ENCODE measurements at regions of chr6 and their contacts with region 1.

Region 1: DNA sequence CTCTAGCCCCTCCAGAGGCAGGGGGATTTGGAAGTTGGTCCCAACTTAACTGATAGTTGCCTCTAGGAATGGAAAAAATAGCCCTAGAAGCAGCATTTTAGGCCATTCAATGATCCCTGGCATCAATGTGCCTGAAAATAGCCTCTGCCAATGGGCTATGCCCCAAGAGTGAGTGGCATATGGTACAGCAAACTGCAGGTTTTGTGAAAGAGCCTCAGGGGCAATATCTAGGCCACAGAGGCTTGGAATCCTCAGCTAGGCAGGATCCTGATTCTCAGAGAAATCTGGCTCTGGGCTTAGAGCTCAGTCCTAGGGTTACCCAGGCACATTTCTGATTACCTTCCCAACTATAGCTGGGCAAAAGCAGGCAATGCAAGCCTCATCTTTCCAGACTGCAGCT is 104.4 kb upstream of the MOCS1 start:
- DNase-seq: no peak
- H3K4me3 ChIP-seq: no peak overlapping the region
- H3K27ac ChIP-seq: no peak overlapping the region
- H3K4me1 ChIP-seq: peaks cover 0 to 7% (median 3%) of the 10 kb centered on the region in 4 experiments; a peak in 3 of 7 replicates
- H3K27me3 ChIP-seq: no peaks in the 10 kb centered on the region
- CTCF ChIP-seq: no peak
- EP300 ChIP-seq: no peak
- POLR2A ChIP-seq: no peak
- RAD21 ChIP-seq: peak in 1 of 2 experiments; percentile 34; a peak in 1 of 4 replicates

Region 2: DNA sequence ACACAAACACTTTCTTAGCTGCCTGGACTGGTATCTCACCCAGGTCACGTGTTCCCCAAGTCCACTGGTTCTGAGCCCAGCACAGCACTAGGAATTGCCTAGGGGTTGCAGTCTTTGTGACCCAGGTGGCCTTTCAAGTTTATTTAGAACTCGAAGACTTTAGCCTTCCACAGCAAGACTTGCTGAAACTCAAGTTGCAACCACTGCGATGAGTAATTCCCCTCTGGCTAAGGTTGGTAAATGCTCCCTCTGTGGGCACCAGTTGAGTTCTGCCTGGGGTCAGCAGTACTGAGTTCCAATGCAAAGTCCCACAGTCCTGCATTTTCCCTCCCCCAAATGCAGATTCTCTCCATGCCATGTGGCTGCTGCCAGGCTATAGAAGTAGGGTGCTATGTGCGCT is 26.8 kb before region 1 on chr6:
- CTCF ChIA-PET with region 1: no interaction called
- POLR2A ChIA-PET with region 1: no interaction called
- DNase-seq: peak in 1 of 2 experiments; percentile 25
- H3K4me3 ChIP-seq: no peak overlapping the region
- H3K27ac ChIP-seq: no peak overlapping the region
- H3K4me1 ChIP-seq: peaks cover 0 to 4% (median 0%) of the 10 kb centered on the region in 4 experiments; a peak in 1 of 7 replicates
- H3K27me3 ChIP-seq: no peaks in the 10 kb centered on the region
- CTCF ChIP-seq: peak in 1 of 3 experiments; percentile 4; a peak in 1 of 4 replicates
- EP300 ChIP-seq: no peak
- POLR2A ChIP-seq: no peak
- RAD21 ChIP-seq: peak; percentile 11 to 21; a peak in 2 of 4 replicates

Region 3: GRCh38 chr6:40028449-40028848 is 10.2 kb before region 1 on chr6:
- CTCF ChIA-PET with region 1: interaction called, 17 read pairs
- POLR2A ChIA-PET with region 1: no interaction called
- DNase-seq: no peak
- H3K4me3 ChIP-seq: no peak overlapping the region
- H3K27ac ChIP-seq: no peak overlapping the region
- H3K4me1 ChIP-seq: no peaks in the 10 kb centered on the region
- H3K27me3 ChIP-seq: no peaks in the 10 kb centered on the region
- CTCF ChIP-seq: peak in 1 of 3 experiments; percentile 39; a peak in 2 of 4 replicates
- EP300 ChIP-seq: no peak
- POLR2A ChIP-seq: no peak
- RAD21 ChIP-seq: peak in 1 of 2 experiments; percentile 29; a peak in 1 of 4 replicates

Region 4: DNA sequence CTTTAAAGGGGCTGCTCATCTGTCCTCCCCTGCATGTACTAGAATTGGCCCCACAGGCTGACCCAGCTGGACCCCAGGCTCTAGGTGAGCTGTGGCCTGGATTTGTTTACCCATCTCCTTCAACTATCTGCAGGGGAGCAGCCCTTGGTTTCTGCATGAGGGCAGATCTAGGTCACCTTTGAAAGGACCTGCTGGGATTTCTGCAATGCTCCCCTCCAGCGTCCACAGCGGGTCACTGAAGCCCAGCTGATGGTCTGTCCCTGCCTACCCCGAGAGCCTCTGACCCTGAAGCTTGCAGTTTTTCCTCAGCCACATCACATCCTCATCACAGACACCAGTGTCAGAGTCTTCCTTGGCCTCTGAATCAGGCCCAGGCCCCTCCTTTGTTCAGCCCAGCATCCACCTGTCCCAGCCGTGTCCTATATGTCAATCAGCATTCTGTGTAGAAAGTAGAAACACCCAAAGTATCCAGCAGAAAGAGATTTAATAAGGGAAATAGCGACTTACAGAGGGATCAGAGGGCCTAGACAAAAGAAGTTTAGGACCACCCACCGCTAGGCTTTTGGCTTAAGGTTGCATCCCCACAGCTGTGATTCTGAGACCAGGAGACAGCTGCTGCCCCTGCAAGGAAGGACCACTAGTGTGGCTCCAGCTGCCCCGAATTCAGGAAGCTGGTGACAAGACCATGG is 305.4 kb after region 1 on chr6:
- CTCF ChIA-PET with region 1: no interaction called
- POLR2A ChIA-PET with region 1: no interaction called
- DNase-seq: peak in 1 of 2 experiments; percentile 48
- H3K4me3 ChIP-seq: no peak overlapping the region
- H3K27ac ChIP-seq: no peak overlapping the region
- H3K4me1 ChIP-seq: peaks cover 9 to 46% (median 30%) of the 10 kb centered on the region in 4 experiments
- H3K27me3 ChIP-seq: no peaks in the 10 kb centered on the region
- CTCF ChIP-seq: no peak
- EP300 ChIP-seq: no peak
- POLR2A ChIP-seq: no peak
- RAD21 ChIP-seq: no peak

Region 5: GRCh38 chr6:40482528-40482927 is 443.9 kb after region 1 on chr6:
- CTCF ChIA-PET with region 1: no interaction called
- POLR2A ChIA-PET with region 1: no interaction called
- DNase-seq: no peak
- H3K4me3 ChIP-seq: no peak overlapping the region
- H3K27ac ChIP-seq: no peak overlapping the region
- H3K4me1 ChIP-seq: peaks cover 0 to 9% (median 4%) of the 10 kb centered on the region in 4 experiments; a peak in 5 of 7 replicates
- H3K27me3 ChIP-seq: peaks cover 0 to 2% (median 0%) of the 10 kb centered on the region in 4 experiments; a peak in 1 of 7 replicates
- CTCF ChIP-seq: no peak
- EP300 ChIP-seq: no peak
- POLR2A ChIP-seq: no peak
- RAD21 ChIP-seq: 0 out of 4 replicates have a peak, but pooled peaks of 1 of the 2 experiments have one; percentile 3

Measured in H1 (cell line).